Activated T-helper 1 cell treated with anti-CD3 and anti-CD28 coated beads, Interleukin-12 subunit alpha, Interleukin-12 subunit beta, Interleukin-2, Interleukin-4 antibody, amounts not matched to agents 30 ng/mL and 10 ng/mL and 1 ng/mL, durations not matched to agents 14 hours and 24 hours and 36 hours (primary cell): ENCODE measurements at regions of chr2 and their contacts with region 1.

Region 1: DNA sequence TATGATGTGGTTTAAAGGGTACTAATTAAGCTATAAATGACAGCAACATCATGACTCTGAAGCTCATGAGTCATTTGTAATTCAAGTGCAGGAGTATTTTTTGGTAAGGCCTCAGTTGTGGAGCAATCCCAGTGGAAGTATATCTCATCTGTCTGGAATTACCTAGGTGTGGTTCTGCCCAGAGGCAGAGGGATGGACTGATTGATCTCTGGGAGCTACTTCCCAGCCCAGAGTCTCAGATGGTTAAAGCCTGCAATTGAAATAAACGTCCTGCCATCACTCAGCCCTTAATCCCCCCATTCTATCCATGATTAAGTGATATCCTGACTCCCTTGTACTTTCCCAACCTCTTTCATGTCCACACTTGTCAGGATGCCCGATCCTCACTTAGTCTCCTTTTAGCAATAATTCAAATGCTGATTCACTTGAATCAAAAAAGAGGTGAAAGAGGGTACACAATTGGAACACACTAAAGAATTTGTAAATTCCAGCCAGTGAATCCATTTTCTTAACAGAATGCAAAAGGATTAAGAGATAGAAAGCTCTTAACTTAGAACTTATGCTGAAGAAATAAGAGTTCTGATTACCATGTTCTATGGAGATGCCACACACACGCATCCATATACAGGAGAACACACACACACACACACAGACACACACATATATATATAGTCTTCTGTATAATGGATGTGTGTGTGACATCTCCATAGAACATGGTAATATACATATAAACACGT is 664.4 kb downstream of the NYAP2 start:
- DNase-seq: no peak
- H3K4me3 Mint-ChIP-seq: no peak overlapping the region
- H3K27ac Mint-ChIP-seq: no peak overlapping the region
- H3K4me1 Mint-ChIP-seq: no peaks in the 10 kb centered on the region
- H3K27me3 Mint-ChIP-seq: no peaks in the 10 kb centered on the region

Region 2: GRCh38 chr2:225337183-225337582 is 726.7 kb before region 1 on chr2:
- intact Hi-C with region 1: loop called (anchors 10 kb)
- DNase-seq: no peak
- H3K4me3 Mint-ChIP-seq: no peak overlapping the region
- H3K27ac Mint-ChIP-seq: no peak overlapping the region
- H3K4me1 Mint-ChIP-seq: no peaks in the 10 kb centered on the region
- H3K27me3 Mint-ChIP-seq: peaks cover 5% of the 10 kb centered on the region

Region 3: GRCh38 chr2:226227359-226227758 is 163.5 kb after region 1 on chr2:
- intact Hi-C with region 1: no loop called
- DNase-seq: no peak
- H3K4me3 Mint-ChIP-seq: no peak overlapping the region
- H3K27ac Mint-ChIP-seq: no peak overlapping the region
- H3K4me1 Mint-ChIP-seq: no peaks in the 10 kb centered on the region
- H3K27me3 Mint-ChIP-seq: peaks cover 5% of the 10 kb centered on the region